A673 (cell line): ENCODE measurements at regions of chr2 and their contacts with region 1.

Region 1: DNA sequence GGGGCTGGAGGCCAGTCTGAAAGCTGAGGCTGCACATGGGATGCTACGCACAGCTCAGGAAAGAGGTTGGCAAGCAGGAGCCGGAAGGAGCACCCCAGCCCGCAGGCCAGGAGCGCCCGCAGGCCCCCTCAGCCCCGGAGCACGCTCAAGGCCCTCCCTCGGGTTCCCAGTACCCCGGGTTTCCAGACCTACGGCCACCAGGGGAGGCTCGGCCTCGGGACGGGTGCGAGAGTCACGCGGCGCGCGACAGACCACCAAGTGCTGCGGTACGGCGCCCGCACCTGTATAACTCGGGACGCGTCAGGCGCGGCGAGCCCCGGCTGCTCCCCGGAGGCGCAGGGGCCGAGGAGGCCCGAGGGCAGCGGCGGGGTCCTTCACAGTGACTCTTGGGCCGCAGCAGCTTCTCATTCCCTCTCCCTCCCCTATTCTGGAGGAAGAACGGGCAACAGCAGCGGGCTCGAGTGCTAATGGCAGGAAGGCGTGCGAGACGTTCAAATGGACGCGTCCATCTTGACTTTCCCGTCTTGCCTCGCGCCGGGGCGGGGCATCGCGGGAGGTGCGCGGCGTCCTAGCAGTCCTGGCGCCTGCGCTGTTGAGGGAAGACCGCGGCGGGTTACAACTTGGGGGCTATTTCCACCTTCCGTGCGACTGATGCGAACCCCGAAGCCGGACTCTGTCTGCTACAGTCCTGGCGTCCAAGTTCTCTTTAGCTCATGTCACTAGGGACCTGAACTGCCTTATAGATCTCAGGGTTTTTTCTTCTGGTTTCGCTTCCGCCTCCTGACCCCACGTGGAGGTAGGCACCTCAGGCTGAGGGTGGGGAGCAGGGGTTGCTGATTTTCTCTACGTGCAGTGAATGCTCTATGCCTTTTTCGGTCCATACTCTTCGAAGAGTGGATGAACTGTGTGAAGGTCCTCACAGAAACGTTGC is at the start of gene ANAPC1:
- DNase-seq: peak; percentile 96
- H3K4me3 ChIP-seq: peak within 1 kb of the TSS; percentile 98
- H3K27ac ChIP-seq: peak within 1 kb of the TSS; percentile 93
- H3K4me1 ChIP-seq: peaks cover 11% of the 10 kb centered on the region
- H3K27me3 ChIP-seq: no peaks in the 10 kb centered on the region
- CTCF ChIP-seq: no peak
- total RNA-seq, gene ANAPC1: 102 and 107 TPM in 2 replicates

Region 2: GRCh38 chr2:111905990-111906735 is 22.2 kb after region 1 on chr2:
- CTCF ChIA-PET with region 1: no interaction called
- POLR2A ChIA-PET with region 1: no interaction called
- intact Hi-C with region 1: no loop called
- DNase-seq: peak; percentile 94
- H3K4me3 ChIP-seq: peak overlapping the region; percentile 3
- H3K27ac ChIP-seq: peak overlapping the region; percentile 84
- H3K4me1 ChIP-seq: peaks cover 84% of the 10 kb centered on the region
- H3K27me3 ChIP-seq: no peaks in the 10 kb centered on the region
- CTCF ChIP-seq: no peak

Region 3: DNA sequence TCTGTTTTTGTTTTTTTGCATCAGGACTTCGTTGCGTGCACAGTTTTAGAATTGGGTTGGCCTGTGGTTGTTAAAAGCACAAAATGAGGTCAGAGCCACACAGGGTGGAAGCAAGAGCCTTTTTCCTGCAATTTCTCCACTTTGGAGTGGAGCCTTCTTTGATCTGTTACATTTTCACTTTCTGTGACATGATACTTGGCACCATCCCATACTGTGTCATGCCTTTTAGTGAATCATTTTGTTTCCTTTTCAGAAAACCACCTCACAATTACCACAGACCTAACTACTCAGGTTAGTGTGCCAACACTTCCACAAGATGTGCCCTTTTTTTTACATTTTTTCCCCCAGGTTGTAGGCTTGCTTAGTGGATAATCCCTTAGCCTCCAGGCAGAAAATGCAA is 46.9 kb after region 1 on chr2:
- CTCF ChIA-PET with region 1: no interaction called
- POLR2A ChIA-PET with region 1: no interaction called
- intact Hi-C with region 1: no loop called
- DNase-seq: peak; percentile 46
- H3K4me3 ChIP-seq: no peak overlapping the region
- H3K27ac ChIP-seq: no peak overlapping the region
- H3K4me1 ChIP-seq: peaks cover 2% of the 10 kb centered on the region
- H3K27me3 ChIP-seq: no peaks in the 10 kb centered on the region
- CTCF ChIP-seq: no peak

Region 4: DNA sequence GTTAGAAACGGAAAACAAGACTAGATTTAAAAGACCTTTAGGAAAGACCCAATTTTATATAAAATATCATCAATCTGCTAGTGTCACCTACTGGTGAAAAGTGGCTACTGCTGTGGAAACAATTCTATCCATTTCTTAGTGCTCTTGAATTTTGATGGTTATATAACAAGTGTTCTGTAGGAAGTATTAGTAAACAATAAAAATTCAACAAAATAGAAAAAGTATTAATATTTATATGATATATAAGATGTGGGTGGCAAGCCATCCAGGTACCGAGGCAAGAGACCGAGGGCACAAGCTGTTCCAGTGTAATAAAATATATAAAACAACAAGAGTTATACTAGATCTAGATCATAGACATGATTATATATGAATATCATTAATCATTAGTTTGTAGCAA is 165.0 kb after region 1 on chr2:
- CTCF ChIA-PET with region 1: interaction called, 11 read pairs
- POLR2A ChIA-PET with region 1: no interaction called
- intact Hi-C with region 1: loop called (anchors 1 kb)
- DNase-seq: peak; percentile 79
- H3K4me3 ChIP-seq: no peak overlapping the region
- H3K27ac ChIP-seq: no peak overlapping the region
- H3K4me1 ChIP-seq: peaks cover 13% of the 10 kb centered on the region
- H3K27me3 ChIP-seq: no peaks in the 10 kb centered on the region
- CTCF ChIP-seq: peak; percentile 85